ENCODE measurements at regions of chr11 and their contacts with region 1.

Region 1: GRCh38 chr11:78860720-78861422 is 286.2 kb upstream of the NARS2 start:
- DNase-seq: no peak
- ATAC-seq: no peak
- H3K4me3 ChIP-seq: no peak overlapping the region
- H3K27ac ChIP-seq: no peak overlapping the region
- H3K4me1 ChIP-seq: no peaks in the 10 kb centered on the region
- H3K27me3 ChIP-seq: peaks cover 3% of the 10 kb centered on the region; the same call in 1 of the 2 replicates
- CTCF ChIP-seq: no peak

Region 2: DNA sequence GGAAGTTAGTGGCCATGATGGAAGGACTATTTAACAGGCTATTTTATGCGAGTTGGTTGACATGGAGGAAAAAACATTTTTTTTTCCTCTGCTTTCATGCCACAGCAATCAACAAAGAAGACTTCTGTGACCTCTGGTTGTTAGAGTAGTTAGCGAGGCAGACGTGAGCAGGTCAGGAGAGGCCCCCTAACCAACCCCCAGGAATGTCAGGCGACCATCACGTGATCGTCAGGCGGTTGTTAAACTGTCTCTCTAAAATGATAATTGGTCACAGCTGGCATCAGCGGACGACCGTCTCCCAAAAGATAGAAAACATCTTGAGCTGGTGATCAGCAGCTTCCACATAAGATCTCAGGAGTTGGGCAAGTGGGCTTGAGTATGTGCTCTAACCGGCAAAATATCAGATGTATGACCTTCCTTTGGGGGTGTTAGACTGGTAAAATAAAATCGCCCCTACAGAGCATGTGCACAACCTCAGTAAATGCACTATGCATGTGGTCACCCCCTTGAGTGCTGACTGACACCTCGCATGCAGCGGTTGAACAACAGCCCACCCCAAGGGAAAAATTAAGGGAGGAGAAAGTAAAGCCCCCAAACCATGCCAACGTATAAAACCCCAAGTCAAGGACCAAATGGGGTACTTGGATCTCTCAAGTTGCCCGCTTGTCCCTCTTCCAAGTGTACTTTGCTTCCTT is 265.3 kb before region 1 on chr11:
- CTCF ChIA-PET with region 1: no interaction called
- POLR2A ChIA-PET with region 1: no interaction called
- in situ Hi-C with region 1: no loop called
- intact Hi-C with region 1: no loop called
- DNase-seq: no peak
- ATAC-seq: no peak
- H3K4me3 ChIP-seq: no peak overlapping the region
- H3K27ac ChIP-seq: no peak overlapping the region
- H3K4me1 ChIP-seq: no peaks in the 10 kb centered on the region
- H3K27me3 ChIP-seq: no peaks in the 10 kb centered on the region
- CTCF ChIP-seq: no peak

Region 3: GRCh38 chr11:78748918-78749690 is 111.8 kb before region 1 on chr11:
- CTCF ChIA-PET with region 1: no interaction called
- POLR2A ChIA-PET with region 1: no interaction called
- in situ Hi-C with region 1: no loop called
- intact Hi-C with region 1: no loop called
- DNase-seq: no peak
- ATAC-seq: no peak
- H3K4me3 ChIP-seq: no peak overlapping the region
- H3K27ac ChIP-seq: no peak overlapping the region
- H3K4me1 ChIP-seq: no peaks in the 10 kb centered on the region
- H3K27me3 ChIP-seq: no peaks in the 10 kb centered on the region
- CTCF ChIP-seq: no peak

Region 4: DNA sequence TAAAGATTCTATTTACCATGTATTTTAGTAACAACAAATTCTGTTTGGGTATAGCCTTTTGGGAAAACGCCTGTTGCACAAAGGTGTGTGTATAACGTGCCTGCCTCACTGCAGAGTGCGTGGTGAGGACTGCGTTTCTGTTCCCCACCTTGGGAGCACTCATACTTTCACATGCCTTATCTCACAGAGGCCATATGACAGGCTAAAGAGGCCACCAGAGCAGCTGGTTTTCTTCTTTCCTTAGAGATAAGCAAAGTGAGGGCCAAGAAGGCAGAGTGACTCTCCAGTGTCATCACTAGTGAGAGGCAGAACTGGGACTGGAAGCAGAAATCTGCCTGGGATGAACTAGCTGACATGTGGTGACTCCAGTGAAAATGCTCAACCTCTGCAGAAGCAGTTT is 83.0 kb after region 1 on chr11:
- CTCF ChIA-PET with region 1: interaction called, 10 read pairs
- POLR2A ChIA-PET with region 1: no interaction called
- in situ Hi-C with region 1: no loop called
- intact Hi-C with region 1: no loop called
- DNase-seq: no peak
- ATAC-seq: no peak
- H3K4me3 ChIP-seq: no peak overlapping the region
- H3K27ac ChIP-seq: no peak overlapping the region
- H3K4me1 ChIP-seq: no peaks in the 10 kb centered on the region
- H3K27me3 ChIP-seq: peaks cover 15% of the 10 kb centered on the region
- CTCF ChIP-seq: no peak

Measured in Panc1 (cell line).